Adrenal gland (tissue), 19 donors: ENCODE measurements at regions of chr1 and their contacts with region 1.

Region 1: DNA sequence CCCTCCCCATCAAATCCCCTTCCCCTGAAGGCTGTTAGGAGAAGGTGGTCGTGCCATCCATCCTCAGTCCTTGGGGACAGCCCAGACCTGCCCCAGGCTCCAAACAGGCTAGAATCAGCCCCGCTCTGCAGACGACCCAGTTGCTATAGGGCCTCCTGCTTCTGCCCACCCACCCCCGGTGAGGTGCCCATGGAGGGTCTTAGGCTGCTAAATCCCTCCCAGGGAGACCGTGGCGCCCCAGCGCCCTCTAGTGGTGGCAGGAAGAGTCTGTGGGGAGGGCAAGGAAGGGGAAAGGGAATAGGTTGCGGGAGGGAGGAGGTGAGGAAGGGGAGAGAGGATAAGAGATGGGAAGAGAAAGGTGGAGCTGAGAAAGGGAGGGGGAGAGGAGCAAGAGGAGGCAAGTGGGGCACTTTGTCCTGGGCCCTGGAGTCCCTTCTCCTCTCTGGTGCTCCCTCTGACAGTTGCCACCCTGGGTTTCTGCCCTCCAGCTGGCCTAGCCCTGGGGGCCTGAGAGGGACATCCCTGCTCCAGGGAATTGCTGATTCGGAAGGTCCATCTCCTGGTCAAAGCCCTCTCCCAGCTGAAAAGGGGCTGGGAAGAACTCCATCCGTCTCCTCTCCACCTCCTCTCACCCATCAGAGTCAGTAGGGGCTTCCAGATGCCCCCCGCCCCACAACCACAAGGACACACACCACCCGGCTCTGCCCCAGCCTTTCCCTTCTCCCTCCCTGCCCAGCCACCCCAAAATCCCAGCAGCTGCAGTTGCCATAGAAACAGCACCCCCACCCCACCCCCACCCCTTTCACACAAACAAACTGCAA is 55.4 kb downstream of the CAMK2N1 start:
- DNase-seq: peak in 5 of 7 donors; percentile 26 to 55 (median 40)
- H3K4me3 ChIP-seq: no peak overlapping the region
- H3K27ac ChIP-seq: no peak overlapping the region
- H3K4me1 ChIP-seq: no peaks in the 10 kb centered on the region
- H3K27me3 ChIP-seq: no peaks in the 10 kb centered on the region
- CTCF ChIP-seq: peak; percentile 54 to 86 (median 72)
- POLR2A ChIP-seq: no peak

Region 2: GRCh38 chr1:20212685-20213331 is 217.8 kb before region 1 on chr1:
- intact Hi-C with region 1: loop called in 1 of 2 experiments (anchors 10 kb)
- DNase-seq: peak; percentile 59 to 81 (median 74)
- H3K4me3 ChIP-seq: no peak overlapping the region
- H3K27ac ChIP-seq: peak overlapping the region in 3 of 5 donors; percentile 83 to 93 (median 87)
- H3K4me1 ChIP-seq: peaks cover 17 to 28% of the 10 kb centered on the region in 2 donors
- H3K27me3 ChIP-seq: no peaks in the 10 kb centered on the region
- CTCF ChIP-seq: peak; percentile 57 to 87 (median 72)
- POLR2A ChIP-seq: no peak

Region 3: GRCh38 chr1:20223551-20224419 is 206.8 kb before region 1 on chr1:
- intact Hi-C with region 1: loop called (anchors 10 kb)
- DNase-seq: peak in 6 of 7 donors; percentile 21 to 57 (median 34)
- H3K4me3 ChIP-seq: no peak overlapping the region
- H3K27ac ChIP-seq: no peak overlapping the region
- H3K4me1 ChIP-seq: peaks cover 0 to 7% of the 10 kb centered on the region in 2 donors
- H3K27me3 ChIP-seq: no peaks in the 10 kb centered on the region
- CTCF ChIP-seq: no peak
- POLR2A ChIP-seq: no peak

Region 4: GRCh38 chr1:20376880-20377494 is 53.6 kb before region 1 on chr1:
- intact Hi-C with region 1: loop called in 1 of 2 experiments (anchors 5 kb)
- DNase-seq: peak; percentile 50 to 86 (median 64)
- H3K4me3 ChIP-seq: no peak overlapping the region
- H3K27ac ChIP-seq: no peak overlapping the region
- H3K4me1 ChIP-seq: peaks cover 4 to 11% of the 10 kb centered on the region in 2 donors
- H3K27me3 ChIP-seq: no peaks in the 10 kb centered on the region
- CTCF ChIP-seq: peak; percentile 66 to 87 (median 74)
- POLR2A ChIP-seq: no peak